ENCODE measurements at regions of chr6 and their contacts with region 1.

Region 1: GRCh38 chr6:27312146-27312949 is at the start of gene POM121L2:
- DNase-seq: peak; percentile 73
- H3K4me3 ChIP-seq: peak within 1 kb of the TSS; percentile 60 to 90 (median 65)
- H3K27ac ChIP-seq: no peak within 1 kb of the TSS
- H3K4me1 ChIP-seq: peaks cover 13% of the 10 kb centered on the region
- H3K27me3 ChIP-seq: no peaks in the 10 kb centered on the region
- CTCF ChIP-seq: peak; percentile 64 to 87
- total RNA-seq, gene POM121L2: not detected

Region 2: DNA sequence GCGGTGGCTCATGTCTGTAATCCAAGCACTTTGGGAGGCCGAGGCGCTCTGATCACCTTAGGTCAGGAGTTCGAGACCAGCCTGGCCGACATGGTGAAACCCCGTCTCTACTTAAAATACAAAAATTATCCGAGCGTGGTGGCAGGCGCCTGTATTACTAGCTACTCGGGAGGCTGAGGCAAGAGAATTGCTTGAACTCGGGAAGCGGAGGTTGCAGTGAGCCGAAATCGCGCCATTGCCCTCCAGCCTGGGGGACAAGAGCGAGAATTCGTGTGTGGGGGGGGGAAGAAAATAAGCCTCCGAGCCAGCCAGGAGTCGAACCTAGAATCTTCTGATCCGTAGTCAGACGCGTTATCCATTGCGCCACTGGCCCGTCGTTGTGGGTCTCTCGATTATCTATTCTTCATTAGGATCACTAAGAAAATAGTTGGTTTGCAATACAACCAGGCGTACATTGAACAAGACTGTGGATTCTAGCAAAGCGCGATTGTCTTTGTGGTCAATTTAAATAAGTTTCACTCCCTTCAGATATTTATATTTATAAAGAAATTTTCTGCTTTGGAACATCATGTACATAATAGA is 98.7 kb before region 1 on chr6:
- CTCF ChIA-PET with region 1: no interaction called
- dilution Hi-C with region 1: no loop called
- in situ Hi-C with region 1: no loop called
- intact Hi-C with region 1: loop called (anchors 1 kb)
- DNase-seq: peak; percentile 40
- H3K4me3 ChIP-seq: peak overlapping the region in 1 of 3 experiments; percentile 58
- H3K27ac ChIP-seq: no peak overlapping the region
- H3K4me1 ChIP-seq: no peaks in the 10 kb centered on the region
- H3K27me3 ChIP-seq: no peaks in the 10 kb centered on the region
- CTCF ChIP-seq: no peak

Region 3: GRCh38 chr6:27374824-27375612 is 62.7 kb after region 1 on chr6:
- CTCF ChIA-PET with region 1: no interaction called
- dilution Hi-C with region 1: no loop called
- in situ Hi-C with region 1: no loop called
- intact Hi-C with region 1: loop called (anchors 5 kb)
- DNase-seq: peak; percentile 89
- H3K4me3 ChIP-seq: peak overlapping the region; percentile 64 to 90 (median 78)
- H3K27ac ChIP-seq: peak overlapping the region; percentile 55
- H3K4me1 ChIP-seq: peaks cover 11% of the 10 kb centered on the region
- H3K27me3 ChIP-seq: no peaks in the 10 kb centered on the region
- CTCF ChIP-seq: no peak

Region 4: DNA sequence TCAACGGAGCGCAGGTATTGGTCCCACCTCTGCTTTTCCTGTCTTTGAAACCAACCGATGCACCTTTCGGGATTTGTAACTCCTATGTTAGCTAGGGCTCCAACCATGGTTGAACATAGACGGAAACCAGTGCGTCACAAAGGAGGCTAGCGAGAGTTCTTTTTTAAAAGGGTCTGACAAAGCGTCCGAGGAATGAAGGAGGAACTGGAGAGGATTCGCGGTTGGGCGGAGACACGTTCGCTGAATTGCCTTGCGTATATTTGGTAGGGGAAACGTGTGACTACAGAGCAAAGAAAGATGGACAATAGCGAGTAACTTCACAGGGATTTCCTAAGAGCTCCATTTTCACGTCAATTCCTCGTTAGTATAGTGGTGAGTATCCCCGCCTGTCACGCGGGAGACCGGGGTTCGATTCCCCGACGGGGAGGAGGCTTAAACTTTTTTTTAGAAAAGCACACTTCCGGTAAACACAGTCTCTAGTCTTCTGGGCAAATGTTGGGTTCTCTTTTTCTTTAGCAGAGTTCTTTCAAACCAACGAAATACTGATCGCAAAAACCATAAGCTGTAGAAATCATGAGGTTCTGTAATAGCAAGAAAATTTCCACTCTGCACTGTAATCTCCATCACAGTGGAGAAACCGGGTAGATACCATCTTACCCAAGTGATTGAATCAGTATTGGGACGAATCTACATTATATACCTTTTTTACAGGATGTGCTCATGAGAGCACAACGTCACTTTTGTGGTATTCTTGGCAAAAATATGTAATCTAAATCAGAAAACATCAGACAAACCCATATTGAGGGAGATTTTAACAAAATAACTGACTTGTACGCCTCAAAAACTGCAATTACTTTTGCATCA is 167.2 kb after region 1 on chr6:
- CTCF ChIA-PET with region 1: no interaction called
- dilution Hi-C with region 1: no loop called
- in situ Hi-C with region 1: no loop called
- intact Hi-C with region 1: loop called (anchors 1 kb)
- DNase-seq: peak; percentile 89
- H3K4me3 ChIP-seq: peak overlapping the region; percentile 62 to 79 (median 76)
- H3K27ac ChIP-seq: peak overlapping the region; percentile 90
- H3K4me1 ChIP-seq: peaks cover 5% of the 10 kb centered on the region
- H3K27me3 ChIP-seq: no peaks in the 10 kb centered on the region
- CTCF ChIP-seq: no peak

Region 5: DNA sequence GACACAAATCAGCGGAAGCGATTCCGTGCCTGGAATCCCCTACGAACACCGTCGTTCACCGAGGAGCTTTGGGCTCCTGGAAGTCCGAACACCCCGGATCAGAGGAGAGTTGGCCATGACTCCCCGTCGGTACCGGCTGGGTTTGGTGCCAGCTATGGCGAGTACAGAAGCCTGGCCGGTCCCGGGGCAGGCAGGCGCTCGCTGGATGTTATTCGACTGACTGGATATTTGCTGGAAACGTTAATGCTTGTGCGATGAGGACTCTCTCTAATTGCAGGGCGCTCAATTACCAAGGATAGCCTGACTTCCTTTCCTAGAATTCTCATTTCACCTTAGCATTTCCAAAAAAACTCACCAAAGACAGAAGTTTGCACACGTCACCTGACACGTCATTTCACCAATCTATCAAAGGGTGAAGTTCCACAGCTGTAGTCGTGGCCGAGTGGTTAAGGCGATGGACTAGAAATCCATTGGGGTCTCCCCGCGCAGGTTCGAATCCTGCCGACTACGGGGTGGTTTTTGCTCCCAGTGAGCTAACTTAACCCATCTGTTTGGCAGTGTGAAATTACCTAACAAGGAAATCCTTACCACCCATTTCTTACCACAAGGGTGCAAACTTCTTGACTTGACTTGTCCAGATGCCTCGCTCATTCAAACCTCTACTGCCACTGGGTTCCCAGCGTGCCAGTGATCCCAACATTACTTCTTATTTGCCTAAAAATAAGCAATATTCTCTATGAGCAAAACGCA is 183.2 kb after region 1 on chr6:
- CTCF ChIA-PET with region 1: no interaction called
- dilution Hi-C with region 1: no loop called
- in situ Hi-C with region 1: no loop called
- intact Hi-C with region 1: loop called (anchors 1 kb)
- DNase-seq: peak; percentile 93
- H3K4me3 ChIP-seq: peak overlapping the region; percentile 62 to 70 (median 65)
- H3K27ac ChIP-seq: peak overlapping the region; percentile 50
- H3K4me1 ChIP-seq: peaks cover 4% of the 10 kb centered on the region
- H3K27me3 ChIP-seq: no peaks in the 10 kb centered on the region
- CTCF ChIP-seq: peak in 1 of 2 donors; percentile 10

Region 6: GRCh38 chr6:27518881-27519795 is 206.8 kb after region 1 on chr6:
- CTCF ChIA-PET with region 1: interaction called, 10 read pairs
- dilution Hi-C with region 1: no loop called
- in situ Hi-C with region 1: no loop called
- intact Hi-C with region 1: loop called (anchors 2 kb)
- DNase-seq: peak; percentile 86
- H3K4me3 ChIP-seq: peak overlapping the region; percentile 45 to 67 (median 55)
- H3K27ac ChIP-seq: peak overlapping the region; percentile 52
- H3K4me1 ChIP-seq: peaks cover 15% of the 10 kb centered on the region
- H3K27me3 ChIP-seq: peaks cover 3% of the 10 kb centered on the region
- CTCF ChIP-seq: peak; percentile 76 to 77

Region 7: GRCh38 chr6:27592481-27593199 is 280.3 kb after region 1 on chr6:
- CTCF ChIA-PET with region 1: no interaction called
- dilution Hi-C with region 1: no loop called
- in situ Hi-C with region 1: no loop called
- intact Hi-C with region 1: loop called (anchors 5 kb)
- DNase-seq: peak; percentile 84
- H3K4me3 ChIP-seq: peak overlapping the region; percentile 43 to 62 (median 48)
- H3K27ac ChIP-seq: no peak overlapping the region
- H3K4me1 ChIP-seq: peaks cover 13% of the 10 kb centered on the region
- H3K27me3 ChIP-seq: no peaks in the 10 kb centered on the region
- CTCF ChIP-seq: no peak